Right ventricle myocardium inferior (tissue), 1 donor: ENCODE measurements at regions of chr19 and their contacts with region 1.

Region 1: GRCh38 chr19:13670827-13671226 is 93.5 kb upstream of the MRI1 start:
- DNase-seq: no peak
- ATAC-seq: no peak

Region 2: DNA sequence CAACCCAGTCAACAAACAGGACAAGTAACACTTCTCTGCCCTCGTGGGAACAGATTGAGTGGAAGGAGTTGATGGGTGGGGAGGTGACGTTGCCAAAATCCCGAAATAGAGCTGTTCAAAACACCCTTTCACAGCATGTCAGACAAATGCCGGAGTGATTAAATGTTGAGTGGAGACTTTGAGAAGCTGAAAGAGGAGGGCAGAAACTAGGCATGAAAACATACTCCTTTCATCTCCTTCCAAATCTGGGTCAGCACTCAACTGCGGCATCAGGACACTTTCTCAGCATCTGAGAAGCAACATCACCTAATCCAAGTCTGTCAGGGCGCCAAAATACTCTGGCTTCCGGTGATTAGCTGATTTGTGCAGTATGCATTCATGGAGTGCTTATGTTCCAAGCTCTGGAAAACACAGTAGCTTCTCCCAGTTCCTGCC is 42.0 kb after region 1 on chr19:
- intact Hi-C with region 1: loop called (anchors 5 kb)
- DNase-seq: no peak
- ATAC-seq: peak; percentile 90

Region 3: GRCh38 chr19:13995017-13995728 is 324.3 kb after region 1 on chr19:
- intact Hi-C with region 1: no loop called
- DNase-seq: peak; percentile 60
- ATAC-seq: peak; percentile 85